Left cardiac atrium (tissue), 4 donors: ENCODE measurements at regions of chr4 and their contacts with region 1.

Region 1: GRCh38 chr4:123848606-123849005 is 452.0 kb downstream of the SPRY1 start:
- DNase-seq: no peak
- ATAC-seq: no peak

Region 2: GRCh38 chr4:124092541-124092984 is 244.0 kb after region 1 on chr4:
- intact Hi-C with region 1: loop called in 1 of 2 experiments (anchors 10 kb)
- DNase-seq: no peak
- ATAC-seq: peak; percentile 62 to 83